Panc1 (cell line): ENCODE measurements at regions of chr7 and their contacts with region 1.

Region 1: GRCh38 chr7:33886149-33886623 is 19.2 kb upstream of the BMPER start:
- DNase-seq: no peak
- ATAC-seq: no peak
- H3K4me3 ChIP-seq: no peak overlapping the region
- H3K27ac ChIP-seq: no peak overlapping the region
- H3K4me1 ChIP-seq: no peaks in the 10 kb centered on the region
- H3K27me3 ChIP-seq: peaks cover 7% of the 10 kb centered on the region
- CTCF ChIP-seq: 0 out of 2 replicates have a peak, but pooled peaks have one; percentile 14

Region 2: GRCh38 chr7:33425395-33425794 is 460.8 kb before region 1 on chr7:
- CTCF ChIA-PET with region 1: no interaction called
- POLR2A ChIA-PET with region 1: no interaction called
- in situ Hi-C with region 1: no loop called
- intact Hi-C with region 1: no loop called
- DNase-seq: no peak
- ATAC-seq: no peak
- H3K4me3 ChIP-seq: no peak overlapping the region
- H3K27ac ChIP-seq: no peak overlapping the region
- H3K4me1 ChIP-seq: no peaks in the 10 kb centered on the region
- H3K27me3 ChIP-seq: no peaks in the 10 kb centered on the region
- CTCF ChIP-seq: no peak

Region 3: DNA sequence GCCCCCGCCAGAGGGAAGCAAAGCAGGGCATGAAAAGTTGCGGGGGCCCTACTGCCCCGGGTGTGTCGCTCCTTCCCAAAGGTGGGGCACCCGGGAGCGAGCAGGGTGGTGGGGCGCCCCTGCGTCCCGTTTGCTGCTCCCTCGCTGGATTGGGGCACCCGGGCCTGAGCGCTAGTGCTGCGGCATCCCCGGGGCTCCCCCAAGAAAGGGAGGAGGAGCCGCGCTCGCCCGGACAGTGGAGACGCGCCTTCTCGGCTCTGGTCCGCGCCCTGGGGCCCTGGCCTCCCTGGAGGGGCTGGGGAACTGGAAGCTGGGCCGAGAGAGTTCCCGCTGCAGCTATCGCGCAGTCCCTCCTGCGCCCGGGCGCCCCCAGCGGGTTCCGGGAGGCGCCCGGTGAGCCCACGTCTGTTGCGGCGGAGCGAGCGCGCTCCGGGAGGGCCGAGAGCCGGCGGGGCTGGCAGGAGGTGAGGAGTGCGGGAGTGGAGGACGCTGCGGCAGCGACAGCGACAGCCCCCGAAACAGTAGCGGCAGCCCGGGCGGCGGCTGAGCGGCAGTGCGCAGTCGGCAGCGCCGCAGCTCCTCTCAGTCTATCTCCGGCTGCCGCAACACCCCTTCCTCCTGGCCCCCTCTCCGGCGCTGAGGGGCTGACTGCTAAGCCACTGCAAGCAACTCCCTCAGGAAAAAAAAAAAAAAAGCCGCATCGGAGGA is 18.6 kb after region 1 on chr7:
- CTCF ChIA-PET with region 1: interaction called, 10 read pairs
- POLR2A ChIA-PET with region 1: no interaction called
- in situ Hi-C with region 1: no loop called
- intact Hi-C with region 1: no loop called
- DNase-seq: no peak
- ATAC-seq: peak; percentile 84
- H3K4me3 ChIP-seq: peak overlapping the region; percentile 48 to 53
- H3K27ac ChIP-seq: no peak overlapping the region
- H3K4me1 ChIP-seq: peaks cover 4% of the 10 kb centered on the region
- H3K27me3 ChIP-seq: peaks cover 69% of the 10 kb centered on the region
- CTCF ChIP-seq: peak; percentile 39

Region 4: DNA sequence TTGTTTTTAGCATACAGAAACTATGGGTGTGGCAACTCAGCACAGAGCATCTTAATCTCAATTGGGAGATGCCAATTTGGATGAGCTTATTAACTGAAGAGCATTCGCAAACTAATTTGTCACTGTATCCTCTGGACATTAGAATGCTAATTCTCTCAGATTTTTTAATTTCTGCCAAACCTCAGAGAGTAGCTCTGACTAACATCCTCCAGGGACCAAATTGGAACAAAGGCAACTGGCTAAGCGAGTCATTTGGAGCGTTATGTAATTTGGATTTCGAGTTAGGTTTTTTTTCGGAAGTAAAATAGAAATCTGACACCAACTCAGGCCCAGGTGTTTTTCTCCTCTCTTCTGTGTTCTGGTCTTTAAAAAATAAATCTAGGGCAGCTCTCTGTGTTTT is 221.1 kb after region 1 on chr7:
- CTCF ChIA-PET with region 1: no interaction called
- POLR2A ChIA-PET with region 1: no interaction called
- in situ Hi-C with region 1: no loop called
- intact Hi-C with region 1: no loop called
- DNase-seq: no peak
- ATAC-seq: no peak
- H3K4me3 ChIP-seq: no peak overlapping the region
- H3K27ac ChIP-seq: no peak overlapping the region
- H3K4me1 ChIP-seq: no peaks in the 10 kb centered on the region
- H3K27me3 ChIP-seq: no peaks in the 10 kb centered on the region
- CTCF ChIP-seq: no peak